HAP-1 (cell line): ENCODE measurements at regions of chr12 and their contacts with region 1.

Region 1: GRCh38 chr12:7108796-7109571 is at the start of gene C1RL:
- DNase-seq: peak; percentile 89 to 94
- H3K4me3 ChIP-seq: peak within 1 kb of the TSS; percentile 48
- H3K4me1 ChIP-seq: no peaks in the 10 kb centered on the region; the same call in 1 of the 2 replicates
- H3K27me3 ChIP-seq: no peaks in the 10 kb centered on the region

Region 2: GRCh38 chr12:6735448-6736191 is 373.4 kb before region 1 on chr12:
- in situ Hi-C with region 1: loop called (anchors 25 kb)
- DNase-seq: peak; percentile 60 to 70
- H3K4me3 ChIP-seq: no peak overlapping the region
- H3K4me1 ChIP-seq: no peaks in the 10 kb centered on the region
- H3K27me3 ChIP-seq: no peaks in the 10 kb centered on the region

Region 3: DNA sequence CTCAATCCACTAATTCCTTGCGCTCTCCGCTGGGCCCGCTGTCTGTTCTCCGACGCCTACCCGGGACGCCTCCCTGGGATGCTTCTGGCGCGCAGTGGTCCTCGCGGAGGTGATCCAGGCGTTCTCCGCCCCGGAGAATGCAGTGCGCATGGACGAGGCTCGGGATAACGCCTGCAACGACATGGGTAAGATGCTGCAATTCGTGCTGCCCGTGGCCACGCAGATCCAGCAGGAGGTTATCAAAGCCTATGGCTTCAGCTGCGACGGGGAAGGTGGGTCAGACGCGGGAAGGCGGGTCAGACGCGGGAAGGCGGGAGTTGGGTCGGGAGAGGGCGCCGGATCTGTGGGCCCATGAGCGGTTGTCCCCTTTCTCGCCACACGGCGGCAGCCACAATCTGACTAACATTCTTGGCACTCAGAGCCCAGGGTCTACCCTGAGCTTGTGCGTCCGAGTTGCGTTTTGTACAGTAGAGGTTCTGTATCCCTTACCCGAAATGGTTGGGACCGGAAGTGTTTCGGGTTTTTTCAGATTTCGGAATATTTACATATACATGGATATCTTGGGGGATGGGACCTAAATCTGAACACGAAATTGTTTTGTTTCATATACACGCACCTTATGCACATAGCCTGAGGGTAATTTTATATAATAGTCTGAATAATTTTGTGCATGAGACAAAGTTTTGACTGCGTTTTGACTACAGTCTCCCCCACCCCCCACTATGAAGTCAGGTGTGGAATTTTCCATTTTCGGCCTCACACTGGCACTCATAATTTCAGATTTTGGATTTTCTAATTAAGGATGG is 164.4 kb before region 1 on chr12:
- in situ Hi-C with region 1: loop called (anchors 10 kb)
- DNase-seq: peak; percentile 93 to 95
- H3K4me3 ChIP-seq: peak overlapping the region; percentile 50
- H3K4me1 ChIP-seq: peaks cover 16% of the 10 kb centered on the region
- H3K27me3 ChIP-seq: no peaks in the 10 kb centered on the region